ENCODE measurements at regions of chr4 and their contacts with region 1.

Region 1: GRCh38 chr4:140252742-140253555 is 99.0 kb upstream of the MAML3 start:
- DNase-seq: peak; percentile 71 to 91 (median 91)
- ATAC-seq: peak; percentile 92
- H3K4me3 ChIP-seq: peak overlapping the region; percentile 83
- H3K27ac ChIP-seq: peak overlapping the region; percentile 83
- H3K4me1 ChIP-seq: peaks cover 2% of the 10 kb centered on the region
- H3K27me3 ChIP-seq: no peaks in the 10 kb centered on the region

Region 2: GRCh38 chr4:140012688-140013486 is 240.1 kb before region 1 on chr4:
- intact Hi-C with region 1: loop called (anchors 5 to 10 kb)
- DNase-seq: peak in 2 of 3 donors; percentile 42 to 70
- ATAC-seq: peak; percentile 89 to 91
- H3K4me3 ChIP-seq: no peak overlapping the region
- H3K27ac ChIP-seq: no peak overlapping the region
- H3K4me1 ChIP-seq: no peaks in the 10 kb centered on the region
- H3K27me3 ChIP-seq: no peaks in the 10 kb centered on the region

Region 3: DNA sequence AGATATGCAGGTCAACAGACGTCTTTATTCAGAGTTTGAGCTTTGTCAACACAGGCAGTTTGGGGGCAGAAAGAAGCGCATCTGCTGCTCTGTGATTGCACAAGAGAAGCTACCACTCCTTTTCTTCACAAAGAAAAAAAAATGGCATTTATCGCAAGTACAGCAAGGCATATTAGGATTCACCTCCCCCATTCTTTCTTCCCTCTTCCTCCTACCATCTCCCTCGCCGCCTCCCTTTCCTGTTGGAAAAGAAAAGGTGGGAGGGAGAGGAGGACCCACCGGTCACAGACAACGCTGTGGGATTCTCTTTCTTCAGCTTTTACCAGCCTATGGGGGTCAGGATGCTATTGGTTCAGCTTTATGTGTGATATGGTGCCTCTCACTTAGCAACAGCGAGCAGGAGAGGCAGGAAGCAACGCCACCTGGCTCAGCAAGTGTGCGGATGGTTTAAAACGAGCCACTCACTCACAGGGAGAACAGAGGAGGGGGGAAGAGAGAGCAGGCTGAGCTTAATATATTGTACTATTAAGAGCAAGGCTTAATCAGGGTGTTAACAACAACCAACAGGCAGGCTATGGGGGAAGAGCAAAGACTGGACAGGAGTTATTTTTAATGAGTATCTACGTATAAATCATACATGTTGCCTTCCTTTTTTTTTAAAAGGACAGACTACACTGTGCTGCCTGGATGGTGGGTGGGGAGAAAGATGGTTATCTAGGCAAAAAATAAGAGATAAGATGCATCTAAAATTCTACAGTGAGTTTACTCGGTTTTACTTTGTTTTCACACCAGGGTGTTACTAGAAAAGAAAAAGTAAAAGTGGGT is 203.7 kb before region 1 on chr4:
- intact Hi-C with region 1: loop called in 1 of 4 experiments (anchors 5 kb)
- DNase-seq: peak in 2 of 3 donors; percentile 27 to 52
- ATAC-seq: peak; percentile 72 to 81
- H3K4me3 ChIP-seq: peak overlapping the region; percentile 31
- H3K27ac ChIP-seq: peak overlapping the region; percentile 42
- H3K4me1 ChIP-seq: peaks cover 5% of the 10 kb centered on the region
- H3K27me3 ChIP-seq: no peaks in the 10 kb centered on the region